ENCODE measurements at regions of chr17 and their contacts with region 1.

Region 1: GRCh38 chr17:38557836-38558727 is 47.7 kb downstream of the SRCIN1 start:
- DNase-seq: peak; percentile 93
- ATAC-seq: peak; percentile 86
- H3K4me3 Mint-ChIP-seq: peak overlapping the region; percentile 79
- H3K27ac Mint-ChIP-seq: no peak overlapping the region
- H3K4me1 Mint-ChIP-seq: peaks cover 30% of the 10 kb centered on the region
- H3K27me3 Mint-ChIP-seq: peaks cover 44% of the 10 kb centered on the region

Region 2: DNA sequence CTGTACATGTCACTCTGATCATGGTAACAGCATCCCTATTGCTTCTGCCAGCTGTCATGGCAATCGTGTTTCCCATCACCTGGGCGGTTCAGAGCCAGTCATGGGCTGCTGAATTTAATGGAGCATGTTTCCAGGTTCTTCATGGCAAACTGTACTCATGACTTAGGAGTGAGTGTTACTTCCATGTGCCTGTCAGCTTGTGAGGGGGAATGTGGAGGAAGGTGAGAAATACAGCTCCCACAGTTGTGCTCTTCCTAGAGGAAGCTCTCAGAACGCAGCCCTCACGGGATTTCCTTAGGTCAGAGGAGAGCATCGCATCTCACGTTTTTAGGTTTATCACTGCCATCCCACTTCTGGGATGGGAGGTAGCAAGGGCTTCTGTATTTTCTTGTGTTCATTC is 157.8 kb before region 1 on chr17:
- CTCF ChIA-PET with region 1: no interaction called
- POLR2A ChIA-PET with region 1: no interaction called
- DNase-seq: no peak
- ATAC-seq: no peak
- H3K4me3 Mint-ChIP-seq: no peak overlapping the region
- H3K27ac Mint-ChIP-seq: no peak overlapping the region
- H3K4me1 Mint-ChIP-seq: peaks cover 5% of the 10 kb centered on the region
- H3K27me3 Mint-ChIP-seq: no peaks in the 10 kb centered on the region

Region 3: GRCh38 chr17:38444151-38444550 is 113.9 kb before region 1 on chr17:
- CTCF ChIA-PET with region 1: no interaction called
- POLR2A ChIA-PET with region 1: no interaction called
- DNase-seq: peak; percentile 70
- ATAC-seq: peak; percentile 89
- H3K4me3 Mint-ChIP-seq: no peak overlapping the region
- H3K27ac Mint-ChIP-seq: no peak overlapping the region
- H3K4me1 Mint-ChIP-seq: peaks cover 4% of the 10 kb centered on the region
- H3K27me3 Mint-ChIP-seq: peaks cover 3% of the 10 kb centered on the region

Region 4: GRCh38 chr17:38498186-38498752 is 59.8 kb before region 1 on chr17:
- CTCF ChIA-PET with region 1: no interaction called
- POLR2A ChIA-PET with region 1: no interaction called
- DNase-seq: no peak
- ATAC-seq: no peak
- H3K4me3 Mint-ChIP-seq: no peak overlapping the region
- H3K27ac Mint-ChIP-seq: no peak overlapping the region
- H3K4me1 Mint-ChIP-seq: peaks cover 5% of the 10 kb centered on the region
- H3K27me3 Mint-ChIP-seq: no peaks in the 10 kb centered on the region

Region 5: DNA sequence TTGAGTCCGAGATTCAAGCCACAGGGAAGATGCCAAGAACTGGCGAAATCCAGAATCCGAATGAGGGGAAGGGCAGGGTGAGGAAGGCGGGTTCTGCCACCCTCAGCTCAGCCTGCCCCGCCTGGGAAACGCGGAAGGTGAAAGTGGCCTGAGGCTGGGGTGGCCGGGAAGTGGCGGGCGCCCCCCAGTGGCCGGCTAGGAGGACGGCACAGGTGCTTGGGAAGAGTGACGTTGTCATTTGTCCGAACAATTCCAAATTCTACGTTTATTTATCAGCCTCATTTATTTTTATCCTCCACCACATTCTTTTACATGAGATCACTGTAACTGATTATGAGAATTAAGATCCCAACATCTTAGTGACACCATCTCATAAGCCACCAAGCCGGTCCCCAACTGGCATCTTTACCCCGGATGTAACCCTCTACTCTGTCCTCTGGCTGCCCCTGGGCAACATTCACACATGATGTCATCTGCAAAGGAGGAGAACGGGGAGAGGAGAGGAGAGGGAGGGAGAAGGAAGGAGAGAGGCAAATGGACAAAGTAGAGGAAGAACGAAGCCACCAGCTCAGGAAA is 26.4 kb after region 1 on chr17:
- CTCF ChIA-PET with region 1: interaction called, 136 read pairs
- POLR2A ChIA-PET with region 1: interaction called, 3 read pairs
- DNase-seq: peak; percentile 65
- ATAC-seq: peak; percentile 72
- H3K4me3 Mint-ChIP-seq: no peak overlapping the region
- H3K27ac Mint-ChIP-seq: no peak overlapping the region
- H3K4me1 Mint-ChIP-seq: peaks cover 30% of the 10 kb centered on the region
- H3K27me3 Mint-ChIP-seq: peaks cover 70% of the 10 kb centered on the region

Region 6: DNA sequence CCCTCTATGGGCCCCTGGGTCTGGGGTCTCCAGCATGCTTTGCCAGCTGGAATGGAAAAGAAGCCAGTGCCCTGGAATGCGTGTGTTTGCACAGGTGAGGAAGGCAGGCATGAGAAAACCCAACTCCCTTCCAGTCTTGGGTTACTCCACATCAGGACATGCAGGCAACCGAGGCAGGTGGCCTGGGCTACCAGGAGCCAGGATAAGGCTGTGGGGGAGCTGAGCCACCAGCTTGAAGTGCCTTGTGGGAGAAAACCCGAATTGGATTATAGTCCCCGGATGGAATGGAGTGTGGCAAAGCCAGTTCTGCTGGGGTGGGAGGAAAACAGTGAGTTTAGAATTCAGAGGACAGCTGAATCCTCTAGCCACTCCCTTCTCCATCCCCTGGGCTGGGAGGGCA is 40.5 kb after region 1 on chr17:
- CTCF ChIA-PET with region 1: interaction called, 37 read pairs
- POLR2A ChIA-PET with region 1: no interaction called
- DNase-seq: peak; percentile 45
- ATAC-seq: peak; percentile 46
- H3K4me3 Mint-ChIP-seq: no peak overlapping the region
- H3K27ac Mint-ChIP-seq: no peak overlapping the region
- H3K4me1 Mint-ChIP-seq: peaks cover 23% of the 10 kb centered on the region
- H3K27me3 Mint-ChIP-seq: peaks cover 73% of the 10 kb centered on the region

Region 7: DNA sequence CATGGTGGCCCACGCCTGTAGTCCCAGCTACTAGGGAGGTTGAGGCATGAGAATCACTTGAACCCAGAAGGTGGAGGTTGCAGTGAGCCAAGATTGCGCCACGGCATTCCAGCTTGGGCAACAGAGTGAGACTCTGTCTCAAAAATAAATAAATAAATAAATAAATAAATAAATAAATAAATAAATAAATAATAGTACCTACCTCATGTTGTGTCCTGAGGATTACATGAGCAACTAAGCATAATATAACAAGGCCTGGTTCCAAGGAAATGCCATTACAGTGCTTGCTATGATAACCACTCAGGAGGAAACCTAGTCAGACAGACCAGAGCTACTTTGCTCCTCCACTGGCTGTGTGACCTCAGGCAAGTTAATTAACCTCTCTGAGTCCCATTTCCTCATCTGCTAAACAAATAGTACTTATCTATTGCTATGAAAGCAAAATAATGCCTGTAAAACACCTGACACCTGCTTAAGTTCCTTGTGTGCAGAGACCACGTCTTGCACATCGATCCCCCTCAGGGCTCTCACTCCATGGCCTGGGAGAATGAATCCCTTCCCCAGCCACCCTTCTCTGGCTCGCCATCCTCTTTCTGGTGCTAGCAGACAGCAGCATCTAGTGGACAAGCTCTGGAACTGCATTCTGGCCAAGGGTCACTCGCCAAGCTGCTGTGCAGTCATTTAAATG is 109.2 kb after region 1 on chr17:
- CTCF ChIA-PET with region 1: interaction called, 345 read pairs
- POLR2A ChIA-PET with region 1: interaction called, 3 read pairs
- DNase-seq: peak; percentile 72
- ATAC-seq: peak; percentile 70
- H3K4me3 Mint-ChIP-seq: no peak overlapping the region
- H3K27ac Mint-ChIP-seq: no peak overlapping the region
- H3K4me1 Mint-ChIP-seq: peaks cover 9% of the 10 kb centered on the region
- H3K27me3 Mint-ChIP-seq: peaks cover 49% of the 10 kb centered on the region

Region 8: GRCh38 chr17:38735161-38735997 is 177.3 kb after region 1 on chr17:
- CTCF ChIA-PET with region 1: interaction called, 28 read pairs
- POLR2A ChIA-PET with region 1: interaction called, 3 read pairs
- DNase-seq: peak; percentile 82
- ATAC-seq: no peak
- H3K4me3 Mint-ChIP-seq: no peak overlapping the region
- H3K27ac Mint-ChIP-seq: no peak overlapping the region
- H3K4me1 Mint-ChIP-seq: peaks cover 41% of the 10 kb centered on the region
- H3K27me3 Mint-ChIP-seq: no peaks in the 10 kb centered on the region